Head of caudate nucleus (tissue), 42 donors: ENCODE measurements at regions of chr3 and their contacts with region 1.

Region 1: GRCh38 chr3:98602078-98602678 is 8.8 kb upstream of the CPOX start:
- DNase-seq: peak in 29 of 42 donors; percentile 20 to 83 (median 56)

Region 2: GRCh38 chr3:98180319-98180890 is 421.8 kb before region 1 on chr3:
- intact Hi-C with region 1: no loop called
- DNase-seq: no peak

Region 3: DNA sequence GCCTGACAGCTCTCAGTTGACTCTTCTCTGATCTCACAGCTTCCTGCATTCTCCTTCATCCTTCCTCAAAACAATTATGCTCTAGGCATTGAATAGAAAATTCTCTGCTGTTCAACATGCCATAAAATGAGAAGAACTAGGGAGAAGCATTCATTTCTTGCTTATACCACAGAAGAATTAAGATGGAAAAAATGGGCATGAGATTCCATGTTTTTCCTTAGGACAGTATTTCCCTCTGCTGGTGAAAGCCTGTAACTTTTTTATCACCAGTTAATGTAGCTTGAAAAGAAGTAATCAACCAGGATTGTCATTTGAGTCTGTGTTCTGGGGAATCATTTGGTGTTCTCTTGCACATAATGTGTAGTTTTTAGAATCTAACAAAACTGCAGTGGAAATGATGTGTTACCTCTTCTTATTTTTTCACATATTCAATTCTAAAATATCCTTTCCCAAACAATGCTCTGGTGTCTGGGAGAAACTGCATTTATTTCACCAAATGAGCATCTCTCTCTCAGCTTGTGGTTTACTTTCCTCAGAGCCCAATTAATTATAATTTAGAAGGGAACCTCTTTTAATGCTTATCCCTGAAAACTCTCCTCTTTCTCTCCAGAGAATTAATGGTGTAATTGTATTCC is 392.1 kb after region 1 on chr3:
- intact Hi-C with region 1: loop called (anchors 5 kb)
- DNase-seq: peak in 2 of 42 donors; percentile 3 to 52